ENCODE measurements at regions of chr2 and their contacts with region 1.

Region 1: GRCh38 chr2:147843864-147844696 is 749 bp upstream of the ACVR2A start:
- DNase-seq: peak; percentile 89
- H3K4me3 Mint-ChIP-seq: peak overlapping the region; percentile 88
- H3K27ac Mint-ChIP-seq: peak overlapping the region; percentile 68
- H3K4me1 Mint-ChIP-seq: peaks cover 33% of the 10 kb centered on the region
- H3K27me3 Mint-ChIP-seq: peaks cover 12% of the 10 kb centered on the region

Region 2: GRCh38 chr2:147490401-147491261 is 353.4 kb before region 1 on chr2:
- CTCF ChIA-PET with region 1: no interaction called
- intact Hi-C with region 1: loop called (anchors 2 kb)
- DNase-seq: no peak
- H3K4me3 Mint-ChIP-seq: no peak overlapping the region
- H3K27ac Mint-ChIP-seq: no peak overlapping the region
- H3K4me1 Mint-ChIP-seq: peaks cover 18% of the 10 kb centered on the region
- H3K27me3 Mint-ChIP-seq: no peaks in the 10 kb centered on the region

Region 3: GRCh38 chr2:147663153-147663961 is 180.7 kb before region 1 on chr2:
- CTCF ChIA-PET with region 1: no interaction called
- intact Hi-C with region 1: loop called (anchors 1 kb)
- DNase-seq: peak; percentile 14
- H3K4me3 Mint-ChIP-seq: peak overlapping the region; percentile 26
- H3K27ac Mint-ChIP-seq: peak overlapping the region; percentile 84
- H3K4me1 Mint-ChIP-seq: peaks cover 24% of the 10 kb centered on the region
- H3K27me3 Mint-ChIP-seq: no peaks in the 10 kb centered on the region

Region 4: DNA sequence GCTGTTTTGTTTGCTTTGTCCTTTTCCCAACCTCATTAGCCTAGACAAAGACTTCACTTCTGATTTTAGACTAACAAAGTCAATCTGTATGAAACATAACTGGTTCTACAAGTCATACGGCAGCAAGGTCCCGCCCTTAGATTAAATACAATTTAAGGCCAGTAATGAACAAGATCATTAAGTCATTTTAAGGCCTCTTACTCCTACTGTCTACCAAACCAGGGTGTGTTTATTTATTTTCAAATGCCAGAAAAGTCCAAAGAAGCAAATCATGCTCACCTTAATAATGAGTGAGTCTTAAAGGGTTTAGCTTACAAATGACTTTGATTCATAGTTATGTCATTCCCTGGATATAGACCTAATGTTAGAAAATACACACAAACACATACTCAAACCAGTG is 147.6 kb before region 1 on chr2:
- CTCF ChIA-PET with region 1: no interaction called
- intact Hi-C with region 1: no loop called
- DNase-seq: no peak
- H3K4me3 Mint-ChIP-seq: no peak overlapping the region
- H3K27ac Mint-ChIP-seq: no peak overlapping the region
- H3K4me1 Mint-ChIP-seq: no peaks in the 10 kb centered on the region
- H3K27me3 Mint-ChIP-seq: no peaks in the 10 kb centered on the region

Region 5: DNA sequence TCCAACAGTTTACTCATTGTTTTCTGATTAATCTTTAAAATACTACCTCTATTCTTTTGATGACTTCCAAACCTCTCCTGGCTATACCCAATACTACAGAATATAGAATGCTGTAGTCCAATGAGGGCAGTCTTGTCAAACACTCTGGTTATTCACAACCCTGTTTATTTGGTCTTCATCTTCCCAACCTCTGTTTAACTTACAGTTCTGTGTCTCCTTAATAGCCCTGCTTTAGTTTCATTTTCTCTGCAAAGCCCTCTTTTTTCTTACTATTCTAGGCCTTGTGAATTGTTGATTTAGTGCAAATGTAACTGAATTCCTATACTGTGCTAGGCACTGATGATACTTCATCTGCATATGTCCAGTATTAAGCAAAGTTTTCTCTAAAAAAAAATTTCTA is 40.8 kb after region 1 on chr2:
- CTCF ChIA-PET with region 1: no interaction called
- intact Hi-C with region 1: loop called (anchors 1 kb)
- DNase-seq: no peak
- H3K4me3 Mint-ChIP-seq: no peak overlapping the region
- H3K27ac Mint-ChIP-seq: no peak overlapping the region
- H3K4me1 Mint-ChIP-seq: peaks cover 43% of the 10 kb centered on the region
- H3K27me3 Mint-ChIP-seq: no peaks in the 10 kb centered on the region

Region 6: GRCh38 chr2:148184976-148185375 is 340.9 kb after region 1 on chr2:
- CTCF ChIA-PET with region 1: no interaction called
- intact Hi-C with region 1: no loop called
- DNase-seq: no peak
- H3K4me3 Mint-ChIP-seq: no peak overlapping the region
- H3K27ac Mint-ChIP-seq: no peak overlapping the region
- H3K4me1 Mint-ChIP-seq: no peaks in the 10 kb centered on the region
- H3K27me3 Mint-ChIP-seq: no peaks in the 10 kb centered on the region

Region 7: DNA sequence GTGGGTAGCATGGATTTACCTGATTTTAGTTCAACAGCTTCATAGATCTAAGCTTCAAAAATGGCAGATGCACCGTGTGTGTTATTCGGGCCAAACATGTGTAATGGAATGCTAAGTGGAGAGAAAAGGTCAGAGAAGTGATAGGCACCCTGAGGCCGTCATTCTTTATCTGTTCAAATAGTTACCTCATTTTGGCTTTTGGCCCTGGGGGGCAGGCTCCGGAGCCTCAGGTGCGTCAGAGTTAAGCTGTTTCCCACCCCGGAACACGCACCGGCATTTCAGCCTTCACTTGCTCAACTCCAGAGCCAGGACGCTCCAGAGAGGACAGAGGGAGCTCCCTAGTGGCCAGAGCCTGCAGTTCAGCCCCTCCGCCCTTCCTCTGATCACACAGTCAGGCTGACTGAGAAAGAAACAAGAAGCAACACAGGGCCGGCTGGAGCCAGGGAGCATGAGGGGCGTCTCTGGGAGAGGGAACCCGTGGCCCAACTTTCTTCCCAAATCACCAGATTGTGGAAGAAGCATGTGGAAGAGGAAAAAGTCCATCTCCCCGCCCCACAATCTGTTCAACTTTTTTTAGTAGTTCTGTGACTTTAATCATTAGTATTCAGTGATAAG is 665.3 kb after region 1 on chr2:
- CTCF ChIA-PET with region 1: no interaction called
- intact Hi-C with region 1: loop called (anchors 2 kb)
- DNase-seq: peak; percentile 97
- H3K4me3 Mint-ChIP-seq: peak overlapping the region; percentile 60
- H3K27ac Mint-ChIP-seq: peak overlapping the region; percentile 70
- H3K4me1 Mint-ChIP-seq: peaks cover 29% of the 10 kb centered on the region
- H3K27me3 Mint-ChIP-seq: no peaks in the 10 kb centered on the region

Region 8: DNA sequence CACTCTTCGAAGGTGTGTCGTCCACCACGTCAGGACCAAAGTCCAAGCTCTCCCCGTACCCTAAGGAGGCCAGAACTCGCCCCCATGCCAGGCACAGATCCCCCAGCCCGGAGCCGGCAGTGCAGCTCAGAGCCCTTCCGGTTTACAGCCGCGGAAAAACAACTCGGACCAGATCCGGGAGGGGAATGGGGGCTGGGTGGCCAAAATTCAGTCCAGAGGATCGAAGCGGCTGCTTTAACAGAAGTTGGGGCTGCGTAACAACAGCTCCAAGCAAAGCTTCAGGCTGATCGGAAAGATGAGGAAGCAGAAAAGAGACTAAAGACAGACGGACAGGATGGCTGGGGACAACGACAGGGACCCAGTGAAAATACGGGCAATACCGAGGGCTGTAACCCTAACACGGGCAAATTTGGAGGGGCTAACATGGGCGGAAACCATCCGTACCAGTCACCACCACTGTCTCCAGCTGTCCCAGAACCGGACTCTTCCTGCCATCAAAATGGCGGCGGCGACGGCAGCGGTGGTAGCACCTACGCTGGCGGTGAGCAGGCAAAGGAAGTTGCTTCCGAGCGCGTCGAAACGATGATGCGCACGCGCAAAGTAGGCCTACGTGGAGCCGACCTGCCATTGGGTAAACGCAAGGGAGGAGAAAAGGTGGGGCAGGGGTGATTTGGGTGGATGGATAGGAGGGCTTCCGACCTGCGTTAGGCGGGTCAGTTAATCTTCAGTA is 1743.3 kb after region 1 on chr2 and contains the start of gene MMADHC:
- CTCF ChIA-PET with region 1: no interaction called
- intact Hi-C with region 1: loop called (anchors 5 kb)
- DNase-seq: peak; percentile 96
- H3K4me3 Mint-ChIP-seq: peak within 1 kb of the TSS; percentile 96
- H3K27ac Mint-ChIP-seq: peak within 1 kb of the TSS; percentile 98
- H3K4me1 Mint-ChIP-seq: peaks cover 30% of the 10 kb centered on the region
- H3K27me3 Mint-ChIP-seq: peaks cover 11% of the 10 kb centered on the region
- total RNA-seq, gene MMADHC: 142 to 143 TPM